MCF 10A (cell line): ENCODE measurements at regions of chr9 and their contacts with region 1.

Region 1: DNA sequence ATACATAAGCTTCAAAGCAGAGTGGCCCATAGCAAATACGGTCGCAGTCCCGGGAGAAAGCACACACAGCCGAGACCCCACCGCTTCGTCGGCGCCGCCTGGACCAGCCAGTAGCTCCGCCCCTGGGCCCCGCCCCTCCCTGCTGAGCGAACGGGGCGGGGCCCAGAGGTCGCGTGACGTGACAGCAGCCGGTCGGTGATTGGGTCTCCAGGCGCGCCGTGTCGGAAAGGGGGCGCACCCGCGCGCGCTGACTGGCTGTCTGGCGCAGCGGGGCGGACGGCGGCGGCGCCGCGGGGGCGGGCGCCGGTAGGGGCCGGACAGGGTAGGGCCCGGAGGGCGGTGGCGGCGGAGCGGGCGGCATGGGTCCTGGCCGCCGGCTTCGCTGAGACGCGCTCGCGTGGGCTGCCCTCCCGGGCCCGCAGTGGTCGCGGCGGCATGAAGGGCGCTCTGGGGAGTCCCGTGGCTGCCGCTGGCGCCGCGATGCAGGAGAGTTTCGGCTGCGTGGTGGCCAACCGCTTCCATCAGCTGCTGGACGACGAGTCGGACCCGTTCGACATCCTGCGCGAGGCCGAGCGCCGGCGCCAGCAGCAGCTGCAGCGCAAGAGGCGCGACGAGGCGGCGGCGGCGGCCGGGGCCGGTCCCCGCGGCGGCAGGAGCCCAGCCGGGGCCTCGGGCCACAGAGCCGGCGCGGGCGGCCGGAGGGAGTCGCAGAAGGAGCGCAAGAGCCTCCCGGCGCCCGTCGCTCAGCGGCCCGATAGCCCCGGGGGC is at the start of gene HABP4:
- DNase-seq: peak; percentile 93
- H3K4me3 Mint-ChIP-seq: peak within 1 kb of the TSS; percentile 80
- H3K27ac Mint-ChIP-seq: peak within 1 kb of the TSS; percentile 37
- H3K4me1 Mint-ChIP-seq: peaks cover 11% of the 10 kb centered on the region
- H3K27me3 Mint-ChIP-seq: no peaks in the 10 kb centered on the region
- CTCF ChIP-seq: no peak
- total RNA-seq, gene HABP4: 4.3 and 6.3 TPM in 2 replicates

Region 2: DNA sequence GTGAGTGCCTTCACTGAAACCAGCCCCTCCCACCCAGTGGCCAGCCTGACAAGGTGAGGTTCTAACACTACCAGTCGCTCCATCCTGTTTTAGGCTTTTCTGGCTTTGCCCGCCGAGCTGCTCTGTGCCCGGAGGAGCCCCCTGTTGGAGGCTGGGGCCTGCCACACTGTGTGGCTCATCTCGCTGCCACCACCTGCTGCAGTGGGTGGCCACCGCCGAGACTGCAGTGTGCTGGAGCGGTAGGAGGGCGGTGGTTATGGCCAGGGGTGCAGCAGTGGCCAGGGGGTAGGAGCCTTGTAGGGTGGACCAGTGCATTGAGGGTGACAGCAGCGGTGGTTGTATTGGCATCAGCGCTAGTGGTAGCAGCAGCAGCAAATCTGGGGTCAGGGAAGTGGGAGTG is 1969.8 kb before region 1 on chr9:
- CTCF ChIA-PET with region 1: no interaction called
- POLR2A ChIA-PET with region 1: no interaction called
- intact Hi-C with region 1: no loop called
- DNase-seq: no peak
- H3K4me3 Mint-ChIP-seq: no peak overlapping the region
- H3K27ac Mint-ChIP-seq: no peak overlapping the region
- H3K4me1 Mint-ChIP-seq: no peaks in the 10 kb centered on the region
- H3K27me3 Mint-ChIP-seq: peaks cover 15% of the 10 kb centered on the region
- CTCF ChIP-seq: no peak

Region 3: GRCh38 chr9:96383165-96383942 is 66.7 kb before region 1 on chr9 and contains the start of gene SLC35D2:
- CTCF ChIA-PET with region 1: interaction called, 4 read pairs
- POLR2A ChIA-PET with region 1: interaction called, 3 read pairs
- intact Hi-C with region 1: loop called (anchors 2 kb)
- DNase-seq: peak; percentile 63
- H3K4me3 Mint-ChIP-seq: peak within 1 kb of the TSS; percentile 83
- H3K27ac Mint-ChIP-seq: peak within 1 kb of the TSS; percentile 77
- H3K4me1 Mint-ChIP-seq: peaks cover 20% of the 10 kb centered on the region
- H3K27me3 Mint-ChIP-seq: no peaks in the 10 kb centered on the region
- CTCF ChIP-seq: no peak
- total RNA-seq, gene SLC35D2: 20.8 and 28.0 TPM in 2 replicates

Region 4: DNA sequence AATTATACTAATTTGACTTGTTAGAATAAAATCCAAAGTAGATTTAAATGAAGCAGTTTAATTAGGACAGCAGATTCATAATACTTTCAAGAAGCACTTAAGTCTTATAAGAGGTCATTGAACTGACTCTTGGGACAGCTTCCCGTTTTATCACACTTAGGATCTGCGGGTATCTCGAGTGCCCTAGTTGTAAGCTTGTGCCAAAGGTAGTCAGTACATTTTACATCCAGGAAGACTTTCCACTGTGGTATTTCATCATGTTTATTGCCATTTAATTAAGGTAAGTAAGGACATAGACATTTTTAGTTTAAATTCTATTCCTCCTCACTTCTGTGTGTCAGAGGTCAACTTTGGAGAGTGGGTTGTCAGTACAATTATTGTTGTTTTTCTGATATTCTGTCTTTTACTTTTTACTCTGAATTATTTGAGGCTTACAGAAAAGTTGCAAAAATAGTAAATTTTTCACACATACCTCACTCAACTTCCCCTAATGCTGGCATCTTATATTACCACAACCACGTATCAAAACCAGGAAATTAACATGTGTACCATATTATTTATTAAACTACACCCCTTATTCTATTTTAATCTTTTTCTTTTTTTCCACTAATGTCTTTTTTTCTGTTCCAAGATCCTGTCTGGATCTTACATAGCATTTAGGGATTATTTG is 24.4 kb before region 1 on chr9:
- CTCF ChIA-PET with region 1: interaction called, 6 read pairs
- POLR2A ChIA-PET with region 1: interaction called, 23 read pairs
- intact Hi-C with region 1: loop called (anchors 1 kb)
- DNase-seq: no peak
- H3K4me3 Mint-ChIP-seq: no peak overlapping the region
- H3K27ac Mint-ChIP-seq: no peak overlapping the region
- H3K4me1 Mint-ChIP-seq: peaks cover 6% of the 10 kb centered on the region
- H3K27me3 Mint-ChIP-seq: no peaks in the 10 kb centered on the region
- CTCF ChIP-seq: no peak

Region 5: DNA sequence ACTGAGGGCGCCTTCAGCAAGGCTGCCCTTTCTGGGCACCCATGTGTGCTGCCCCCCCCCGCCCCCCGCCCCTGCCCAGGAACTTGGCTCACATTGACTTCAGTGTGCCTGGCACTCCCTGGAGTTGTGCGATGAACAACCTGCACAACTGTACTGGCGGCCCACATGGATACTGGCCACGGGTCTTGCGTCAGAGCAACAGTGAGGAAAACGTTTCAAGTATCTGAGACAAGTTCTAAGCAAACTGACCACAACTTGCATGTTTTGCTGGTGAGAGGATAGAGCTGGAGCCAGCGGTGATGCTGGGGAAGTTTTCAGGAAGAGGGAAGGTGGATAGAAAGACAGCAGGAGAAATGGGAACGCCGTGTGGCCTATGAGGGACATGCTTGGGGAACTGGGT is 45.3 kb after region 1 on chr9:
- CTCF ChIA-PET with region 1: no interaction called
- POLR2A ChIA-PET with region 1: no interaction called
- intact Hi-C with region 1: no loop called
- DNase-seq: peak; percentile 38
- H3K4me3 Mint-ChIP-seq: no peak overlapping the region
- H3K27ac Mint-ChIP-seq: no peak overlapping the region
- H3K4me1 Mint-ChIP-seq: no peaks in the 10 kb centered on the region
- H3K27me3 Mint-ChIP-seq: no peaks in the 10 kb centered on the region
- CTCF ChIP-seq: no peak

Region 6: DNA sequence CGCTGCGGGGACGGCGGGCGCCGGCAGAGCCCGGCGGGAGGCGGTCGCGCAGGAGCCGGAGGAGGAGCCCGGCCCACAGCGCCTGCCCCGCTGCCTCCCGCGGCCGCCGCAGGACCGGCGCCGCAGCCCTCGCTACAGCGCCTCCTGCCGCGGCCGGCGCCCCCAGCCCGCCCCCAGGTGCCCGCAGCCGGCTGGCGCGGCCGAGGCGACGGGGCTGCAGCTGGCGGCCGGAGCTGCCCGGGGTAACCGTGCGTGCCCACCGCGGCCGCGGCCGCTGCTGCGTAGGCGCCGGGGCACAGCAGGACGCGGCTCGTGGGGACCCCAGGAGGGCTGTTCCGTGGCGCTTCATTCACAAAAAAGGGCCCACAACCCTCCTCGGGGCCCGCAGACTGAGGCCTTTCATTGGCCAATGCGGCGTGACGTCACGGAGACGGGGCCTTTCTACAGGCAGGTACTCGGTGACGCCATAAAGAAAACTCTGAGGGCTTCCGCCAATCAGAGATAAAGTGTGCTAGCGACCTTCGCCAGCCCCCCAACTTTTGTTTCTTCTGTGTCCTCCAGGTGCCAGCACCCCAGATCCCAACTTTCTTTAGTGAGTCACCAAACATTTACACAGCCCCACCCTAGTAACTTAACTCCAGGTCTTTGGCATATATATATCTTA is 169.6 kb after region 1 on chr9 and contains the start of gene CDC14B:
- CTCF ChIA-PET with region 1: interaction called, 3 read pairs
- POLR2A ChIA-PET with region 1: interaction called, 9 read pairs
- intact Hi-C with region 1: loop called (anchors 2 kb)
- DNase-seq: peak; percentile 91
- H3K4me3 Mint-ChIP-seq: peak within 1 kb of the TSS; percentile 76
- H3K27ac Mint-ChIP-seq: no peak within 1 kb of the TSS
- H3K4me1 Mint-ChIP-seq: peaks cover 12% of the 10 kb centered on the region
- H3K27me3 Mint-ChIP-seq: no peaks in the 10 kb centered on the region
- CTCF ChIP-seq: peak; percentile 12
- total RNA-seq, gene CDC14B: 7.0 and 9.3 TPM in 2 replicates

Region 7: DNA sequence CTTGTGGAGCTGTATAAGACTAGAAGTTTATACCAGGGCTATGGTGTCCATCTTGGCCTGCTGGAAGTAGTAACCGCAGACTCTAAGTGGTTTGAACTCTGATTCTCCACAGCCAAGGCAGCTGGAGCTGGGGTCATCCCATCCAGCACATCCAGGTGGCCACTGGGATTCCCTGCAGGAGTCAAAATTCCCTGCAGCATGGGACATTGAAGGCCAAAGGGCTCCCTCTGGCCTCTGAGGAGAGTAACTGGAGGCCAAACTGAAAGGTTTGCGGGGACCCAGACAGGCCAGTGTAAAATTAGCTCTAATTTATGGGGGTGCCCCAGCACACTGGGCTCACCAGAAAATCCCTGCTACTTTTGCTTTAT is 217.3 kb after region 1 on chr9:
- CTCF ChIA-PET with region 1: interaction called, 21 read pairs
- POLR2A ChIA-PET with region 1: interaction called, 3 read pairs
- intact Hi-C with region 1: no loop called
- DNase-seq: no peak
- H3K4me3 Mint-ChIP-seq: no peak overlapping the region
- H3K27ac Mint-ChIP-seq: no peak overlapping the region
- H3K4me1 Mint-ChIP-seq: no peaks in the 10 kb centered on the region
- H3K27me3 Mint-ChIP-seq: no peaks in the 10 kb centered on the region
- CTCF ChIP-seq: no peak